ENCODE measurements at regions of chr6 and their contacts with region 1.

Region 1: GRCh38 chr6:154276810-154277628 is 79.6 kb downstream of the IPCEF1 start:
- DNase-seq: peak; percentile 53 to 72 (median 68)
- H3K4me3 ChIP-seq: peak overlapping the region in 1 of 7 experiments; percentile 37
- H3K27ac ChIP-seq: no peak overlapping the region
- H3K4me1 ChIP-seq: peaks cover 4 to 32% (median 7%) of the 10 kb centered on the region in 4 experiments
- H3K27me3 ChIP-seq: no peaks in the 10 kb centered on the region

Region 2: GRCh38 chr6:154289863-154290508 is 13.0 kb after region 1 on chr6:
- CTCF ChIA-PET with region 1: interaction called, 22 read pairs
- POLR2A ChIA-PET with region 1: no interaction called
- DNase-seq: peak in 2 of 3 donors; percentile 24 to 42
- H3K4me3 ChIP-seq: no peak overlapping the region
- H3K27ac ChIP-seq: no peak overlapping the region
- H3K4me1 ChIP-seq: peaks cover 0 to 4% (median 0%) of the 10 kb centered on the region in 4 experiments
- H3K27me3 ChIP-seq: no peaks in the 10 kb centered on the region

Region 3: DNA sequence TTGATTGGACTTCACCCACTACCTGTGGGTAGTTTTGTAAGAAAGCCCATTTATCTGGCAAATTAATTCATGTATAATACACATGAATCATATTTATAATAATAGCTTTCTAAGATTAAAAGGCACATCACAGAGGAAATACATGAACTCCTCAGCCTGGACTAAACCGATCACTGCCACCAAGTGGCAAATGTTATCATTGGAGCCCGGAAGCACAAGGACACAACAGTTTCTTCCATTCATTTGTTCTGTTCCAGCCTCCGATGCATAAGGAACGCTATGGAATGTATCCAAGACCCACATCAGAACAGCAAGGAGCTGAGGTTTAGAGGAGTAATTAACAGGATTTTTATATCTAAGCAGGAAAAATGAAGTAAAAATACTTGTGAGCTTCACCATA is 93.5 kb after region 1 on chr6:
- CTCF ChIA-PET with region 1: interaction called, 14 read pairs
- POLR2A ChIA-PET with region 1: no interaction called
- DNase-seq: peak in 2 of 3 donors; percentile 65 to 72
- H3K4me3 ChIP-seq: peak overlapping the region in 1 of 7 experiments; percentile 52
- H3K27ac ChIP-seq: no peak overlapping the region
- H3K4me1 ChIP-seq: peaks cover 0 to 7% (median under 1%) of the 10 kb centered on the region in 4 experiments
- H3K27me3 ChIP-seq: no peaks in the 10 kb centered on the region

Measured in common myeloid progenitor, CD34-positive (primary cell).